ENCODE measurements at regions of chr19 and their contacts with region 1.

Region 1: DNA sequence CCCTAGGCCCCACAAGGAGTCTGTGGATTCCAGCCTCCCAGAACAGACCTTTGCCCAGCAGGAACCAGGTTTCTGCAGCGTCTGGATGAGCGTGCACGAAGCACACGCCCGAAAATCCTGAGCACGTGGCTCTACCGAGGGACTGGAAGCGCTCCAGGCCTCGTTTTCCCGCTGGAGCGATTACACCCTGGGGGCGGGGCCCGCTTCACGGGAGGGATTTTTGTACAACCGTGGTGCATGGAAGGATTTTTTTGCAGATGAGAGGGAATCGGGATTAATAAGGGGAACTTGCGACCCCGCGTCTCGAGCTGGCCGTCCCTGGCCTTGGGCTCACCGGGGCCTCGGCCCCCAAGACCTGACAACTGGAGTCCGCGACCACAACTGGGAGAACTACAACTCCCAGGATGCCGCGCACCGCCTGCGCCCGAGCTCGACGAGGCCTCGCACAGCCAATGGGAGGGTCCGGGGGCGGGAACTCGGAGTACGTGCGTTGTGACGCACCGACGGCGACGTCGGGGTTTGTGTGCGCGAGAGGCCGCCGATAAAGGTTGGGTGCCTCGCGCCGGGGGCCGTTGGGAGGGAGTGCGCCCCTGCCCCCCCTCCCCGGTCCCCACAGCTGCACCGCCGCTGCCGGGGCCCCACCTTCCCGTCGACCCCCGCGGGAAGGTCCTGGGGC is at the start of gene ZNF628:
- H3K4me3 ChIP-seq: peak within 1 kb of the TSS; percentile 68
- H3K27ac ChIP-seq: peak within 1 kb of the TSS; percentile 76
- H3K4me1 ChIP-seq: peaks cover 8% of the 10 kb centered on the region; the same call in 1 of the 2 replicates
- CTCF ChIP-seq: no peak

Region 2: DNA sequence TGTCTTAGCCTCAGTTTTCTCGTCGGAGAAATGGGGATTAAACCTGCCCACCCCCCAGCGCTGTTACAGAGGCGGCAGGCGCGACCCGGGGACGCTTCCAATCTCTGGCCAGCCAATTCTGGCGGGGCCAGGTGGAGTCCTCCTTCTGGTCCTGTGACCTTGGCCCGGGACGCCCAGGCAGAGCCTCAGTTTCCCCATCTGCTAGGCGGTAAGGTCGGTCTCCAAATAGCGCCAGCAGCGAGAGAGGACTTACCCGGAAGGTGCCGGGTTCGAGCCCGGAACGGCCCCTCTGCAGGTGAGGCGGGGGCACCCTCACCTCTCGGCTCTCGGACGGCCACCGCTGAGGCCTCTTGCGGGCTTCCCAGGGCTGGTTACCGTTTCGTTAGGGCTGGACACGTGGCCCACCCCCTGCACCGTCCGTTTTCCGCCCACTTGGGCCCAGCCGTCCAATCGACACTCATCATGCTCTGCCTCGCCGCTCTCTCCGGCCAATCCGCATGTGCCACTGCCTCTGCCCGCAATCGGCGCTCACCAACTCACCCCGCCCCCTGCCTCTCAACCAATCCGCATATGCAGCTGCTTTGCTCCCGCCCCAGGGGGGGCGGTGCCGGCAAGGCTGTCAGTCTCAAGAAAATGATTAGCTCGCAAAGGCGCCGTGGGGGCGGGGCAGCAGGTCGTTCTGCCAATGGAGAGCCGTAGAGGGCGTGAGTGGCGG is 14.8 kb before region 1 on chr19 and contains the start of gene ISOC2:
- CTCF ChIA-PET with region 1: interaction called, 85 read pairs
- POLR2A ChIA-PET with region 1: interaction called, 34 read pairs
- H3K4me3 ChIP-seq: peak within 1 kb of the TSS; percentile 85
- H3K27ac ChIP-seq: peak within 1 kb of the TSS; percentile 56; the same call in 1 of the 2 replicates
- H3K4me1 ChIP-seq: peaks cover 12% of the 10 kb centered on the region
- CTCF ChIP-seq: no peak

Region 3: GRCh38 chr19:55549500-55550320 is 73.5 kb after region 1 on chr19:
- CTCF ChIA-PET with region 1: no interaction called
- POLR2A ChIA-PET with region 1: no interaction called
- H3K4me3 ChIP-seq: peak overlapping the region; percentile 39
- H3K27ac ChIP-seq: 0 out of 2 replicates have a peak overlapping the region, but pooled peaks have one; percentile 36
- H3K4me1 ChIP-seq: peaks cover 9% of the 10 kb centered on the region
- CTCF ChIP-seq: no peak; the same call in 1 of the 2 replicates

Region 4: GRCh38 chr19:55580628-55581144 is 104.4 kb after region 1 on chr19 and contains the start of gene ZNF579:
- CTCF ChIA-PET with region 1: no interaction called
- POLR2A ChIA-PET with region 1: interaction called, 12 read pairs
- H3K4me3 ChIP-seq: peak within 1 kb of the TSS; percentile 100
- H3K27ac ChIP-seq: peak within 1 kb of the TSS; percentile 80
- H3K4me1 ChIP-seq: 0 out of 2 replicates have a peak, but pooled peaks cover 4% of the 10 kb centered on the region
- CTCF ChIP-seq: no peak

Region 5: DNA sequence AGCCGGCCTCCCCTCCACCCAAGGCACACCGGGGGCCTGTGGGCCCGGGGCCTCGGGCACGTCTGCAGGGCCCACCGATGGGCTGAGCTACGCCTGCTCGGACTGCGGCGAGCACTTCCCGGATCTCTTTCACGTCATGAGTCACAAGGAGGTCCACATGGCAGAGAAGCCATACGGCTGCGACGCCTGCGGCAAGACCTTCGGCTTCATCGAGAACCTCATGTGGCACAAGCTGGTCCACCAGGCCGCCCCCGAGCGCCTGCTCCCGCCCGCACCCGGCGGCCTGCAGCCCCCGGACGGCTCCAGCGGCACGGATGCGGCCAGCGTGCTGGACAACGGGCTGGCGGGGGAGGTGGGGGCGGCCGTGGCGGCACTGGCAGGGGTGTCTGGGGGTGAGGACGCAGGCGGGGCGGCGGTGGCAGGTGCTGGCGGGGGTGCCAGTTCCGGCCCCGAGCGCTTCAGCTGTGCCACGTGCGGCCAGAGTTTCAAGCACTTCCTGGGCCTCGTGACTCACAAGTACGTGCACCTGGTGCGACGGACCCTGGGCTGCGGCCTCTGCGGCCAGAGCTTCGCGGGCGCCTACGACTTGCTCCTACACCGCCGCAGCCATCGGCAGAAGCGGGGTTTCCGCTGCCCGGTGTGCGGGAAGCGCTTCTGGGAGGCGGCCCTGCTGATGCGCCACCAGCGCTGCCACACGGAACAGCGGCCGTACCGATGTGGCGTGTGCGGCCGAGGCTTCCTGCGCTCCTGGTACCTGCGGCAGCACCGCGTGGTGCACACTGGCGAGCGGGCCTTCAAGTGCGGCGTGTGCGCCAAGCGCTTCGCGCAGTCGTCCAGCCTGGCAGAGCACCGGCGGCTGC is 139.5 kb after region 1 on chr19:
- CTCF ChIA-PET with region 1: no interaction called
- POLR2A ChIA-PET with region 1: no interaction called
- H3K4me3 ChIP-seq: no peak overlapping the region
- H3K27ac ChIP-seq: no peak overlapping the region
- H3K4me1 ChIP-seq: no peaks in the 10 kb centered on the region
- CTCF ChIP-seq: no peak

Measured in HEK293 (cell line).